Common myeloid progenitor, CD34-positive (primary cell): ENCODE measurements at regions of chr9 and their contacts with region 1.

Region 1: GRCh38 chr9:33816327-33817252 is at the start of gene UBE2R2:
- DNase-seq: peak; percentile 92 to 98 (median 98)
- H3K4me3 ChIP-seq: peak within 1 kb of the TSS; percentile 60 to 95 (median 89)
- H3K27ac ChIP-seq: peak within 1 kb of the TSS; percentile 86 to 89
- H3K4me1 ChIP-seq: peaks cover 28 to 57% (median 42%) of the 10 kb centered on the region in 4 experiments
- H3K27me3 ChIP-seq: no peaks in the 10 kb centered on the region

Region 2: GRCh38 chr9:33329117-33329563 is 487.4 kb before region 1 on chr9:
- CTCF ChIA-PET with region 1: no interaction called
- POLR2A ChIA-PET with region 1: no interaction called
- DNase-seq: no peak
- H3K4me3 ChIP-seq: no peak overlapping the region
- H3K27ac ChIP-seq: no peak overlapping the region
- H3K4me1 ChIP-seq: no peaks in the 10 kb centered on the region
- H3K27me3 ChIP-seq: no peaks in the 10 kb centered on the region

Region 3: GRCh38 chr9:33835625-33836260 is 19.2 kb after region 1 on chr9:
- CTCF ChIA-PET with region 1: interaction called, 53 read pairs
- POLR2A ChIA-PET with region 1: interaction called, 3 read pairs
- DNase-seq: no peak
- H3K4me3 ChIP-seq: no peak overlapping the region
- H3K27ac ChIP-seq: no peak overlapping the region
- H3K4me1 ChIP-seq: peaks cover 0 to 24% (median 7%) of the 10 kb centered on the region in 4 experiments
- H3K27me3 ChIP-seq: no peaks in the 10 kb centered on the region

Region 4: GRCh38 chr9:33843312-33843961 is 26.8 kb after region 1 on chr9:
- CTCF ChIA-PET with region 1: interaction called, 74 read pairs
- POLR2A ChIA-PET with region 1: interaction called, 3 read pairs
- DNase-seq: peak in 2 of 3 donors; percentile 21 to 48
- H3K4me3 ChIP-seq: no peak overlapping the region
- H3K27ac ChIP-seq: no peak overlapping the region
- H3K4me1 ChIP-seq: peaks cover 0 to 20% (median 13%) of the 10 kb centered on the region in 4 experiments
- H3K27me3 ChIP-seq: no peaks in the 10 kb centered on the region

Region 5: DNA sequence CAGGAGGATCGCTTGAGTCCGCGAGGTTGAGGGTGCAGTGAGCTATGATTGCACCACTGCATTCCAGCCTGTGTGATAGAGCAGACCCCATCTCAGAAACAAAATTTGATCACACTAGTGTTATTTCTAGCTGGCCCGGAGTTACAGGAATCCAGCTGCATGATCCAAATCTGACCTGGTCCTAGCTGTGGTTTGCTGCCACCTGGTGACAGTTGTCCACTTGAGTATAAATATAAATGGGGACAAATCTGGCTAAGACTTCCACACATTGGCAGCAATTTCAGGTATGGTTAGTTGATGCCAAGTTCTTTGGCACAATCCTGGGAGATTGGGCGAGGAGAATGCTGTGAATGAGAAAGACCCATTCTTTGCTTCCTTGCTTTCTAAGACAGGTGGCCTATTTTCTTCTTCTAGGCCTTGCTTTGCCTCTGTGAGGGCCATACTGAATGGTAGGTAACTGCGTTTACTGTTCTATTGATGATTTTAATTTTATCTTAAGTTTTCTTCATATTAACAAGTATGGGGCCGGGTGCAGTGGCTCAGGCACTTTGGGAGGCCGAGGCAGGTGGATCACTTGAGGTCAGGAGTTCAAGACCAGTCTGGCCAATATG is 35.7 kb after region 1 on chr9:
- CTCF ChIA-PET with region 1: interaction called, 78 read pairs
- POLR2A ChIA-PET with region 1: no interaction called
- DNase-seq: peak; percentile 73 to 86 (median 79)
- H3K4me3 ChIP-seq: no peak overlapping the region
- H3K27ac ChIP-seq: no peak overlapping the region
- H3K4me1 ChIP-seq: peaks cover 0 to 10% (median 0%) of the 10 kb centered on the region in 4 experiments
- H3K27me3 ChIP-seq: no peaks in the 10 kb centered on the region

Region 6: DNA sequence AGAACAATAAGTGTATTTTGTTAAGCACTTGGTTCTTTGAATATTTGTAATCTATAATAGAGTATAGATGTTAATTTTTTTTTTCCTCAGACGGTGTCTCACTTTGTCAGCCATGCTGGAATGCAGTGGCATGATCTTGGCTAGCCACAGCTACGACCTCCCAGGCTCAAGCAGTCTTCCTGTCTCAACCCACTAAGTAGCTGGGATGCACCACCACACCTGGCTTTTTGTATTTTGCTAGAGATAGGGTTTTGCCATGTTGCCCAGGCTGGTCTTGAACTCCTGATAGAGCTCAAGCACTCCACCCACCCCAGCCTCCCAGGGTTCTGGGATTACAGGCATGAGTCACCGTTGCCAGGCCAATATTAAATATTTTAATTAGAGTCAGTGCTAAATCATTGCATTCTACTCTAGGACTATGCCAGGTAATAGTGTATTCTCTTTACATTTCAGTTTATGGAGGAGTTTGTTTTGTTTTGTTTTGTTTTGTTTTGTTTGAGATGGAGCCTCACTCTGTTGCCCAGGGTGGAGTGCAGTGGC is 41.8 kb after region 1 on chr9:
- CTCF ChIA-PET with region 1: interaction called, 78 read pairs
- POLR2A ChIA-PET with region 1: no interaction called
- DNase-seq: no peak
- H3K4me3 ChIP-seq: no peak overlapping the region
- H3K27ac ChIP-seq: no peak overlapping the region
- H3K4me1 ChIP-seq: no peaks in the 10 kb centered on the region
- H3K27me3 ChIP-seq: no peaks in the 10 kb centered on the region